OCI-LY7 (cell line): ENCODE measurements at regions of chr1 and their contacts with region 1.

Region 1: GRCh38 chr1:23344111-23344986 is at the start of gene HNRNPR:
- DNase-seq: peak; percentile 100
- H3K4me3 ChIP-seq: peak within 1 kb of the TSS; percentile 94
- H3K27ac ChIP-seq: peak within 1 kb of the TSS; percentile 71
- H3K4me1 ChIP-seq: peaks cover 33% of the 10 kb centered on the region
- CTCF ChIP-seq: no peak
- total RNA-seq, gene HNRNPR: 193 and 260 TPM in 2 replicates

Region 2: GRCh38 chr1:23132033-23132432 is 212.3 kb before region 1 on chr1:
- CTCF ChIA-PET with region 1: no interaction called
- POLR2A ChIA-PET with region 1: no interaction called
- intact Hi-C with region 1: no loop called
- DNase-seq: no peak
- H3K4me3 ChIP-seq: no peak overlapping the region
- H3K27ac ChIP-seq: no peak overlapping the region
- H3K4me1 ChIP-seq: no peaks in the 10 kb centered on the region
- CTCF ChIP-seq: no peak

Region 3: GRCh38 chr1:23357138-23357908 is 13.0 kb after region 1 on chr1:
- CTCF ChIA-PET with region 1: no interaction called
- POLR2A ChIA-PET with region 1: interaction called, 10 read pairs
- intact Hi-C with region 1: no loop called
- DNase-seq: no peak
- H3K4me3 ChIP-seq: no peak overlapping the region
- H3K27ac ChIP-seq: no peak overlapping the region
- H3K4me1 ChIP-seq: no peaks in the 10 kb centered on the region
- CTCF ChIP-seq: no peak

Region 4: GRCh38 chr1:23367791-23368561 is 23.6 kb after region 1 on chr1:
- CTCF ChIA-PET with region 1: interaction called, 3 read pairs
- POLR2A ChIA-PET with region 1: interaction called, 13 read pairs
- intact Hi-C with region 1: loop called (anchors 1 kb)
- DNase-seq: peak; percentile 99
- H3K4me3 ChIP-seq: peak overlapping the region; percentile 77
- H3K27ac ChIP-seq: peak overlapping the region; percentile 76
- H3K4me1 ChIP-seq: peaks cover 28% of the 10 kb centered on the region
- CTCF ChIP-seq: no peak

Region 5: GRCh38 chr1:23484253-23485001 is 140.1 kb after region 1 on chr1:
- CTCF ChIA-PET with region 1: no interaction called
- POLR2A ChIA-PET with region 1: no interaction called
- intact Hi-C with region 1: loop called (anchors 1 kb)
- DNase-seq: peak; percentile 92
- H3K4me3 ChIP-seq: peak overlapping the region; percentile 75
- H3K27ac ChIP-seq: peak overlapping the region; percentile 41
- H3K4me1 ChIP-seq: peaks cover 49% of the 10 kb centered on the region
- CTCF ChIP-seq: no peak

Region 6: GRCh38 chr1:23691499-23692307 is 347.4 kb after region 1 on chr1 and contains the start of gene RPL11:
- CTCF ChIA-PET with region 1: no interaction called
- POLR2A ChIA-PET with region 1: no interaction called
- intact Hi-C with region 1: loop called (anchors 5 kb)
- DNase-seq: peak; percentile 97
- H3K4me3 ChIP-seq: peak within 1 kb of the TSS; percentile 90
- H3K27ac ChIP-seq: peak within 1 kb of the TSS; percentile 68
- H3K4me1 ChIP-seq: peaks cover 40% of the 10 kb centered on the region
- CTCF ChIP-seq: peak; percentile 80
- total RNA-seq, gene RPL11: 1,891 and 2,496 TPM in 2 replicates